Activated CD4-positive, alpha-beta memory T cell treated with anti-CD3 and anti-CD28 coated beads, Interleukin-2, amount 10 ng/mL, durations not matched to agents 7 days and 5 days (primary cell): ENCODE measurements at regions of chr7 and their contacts with region 1.

Region 1: DNA sequence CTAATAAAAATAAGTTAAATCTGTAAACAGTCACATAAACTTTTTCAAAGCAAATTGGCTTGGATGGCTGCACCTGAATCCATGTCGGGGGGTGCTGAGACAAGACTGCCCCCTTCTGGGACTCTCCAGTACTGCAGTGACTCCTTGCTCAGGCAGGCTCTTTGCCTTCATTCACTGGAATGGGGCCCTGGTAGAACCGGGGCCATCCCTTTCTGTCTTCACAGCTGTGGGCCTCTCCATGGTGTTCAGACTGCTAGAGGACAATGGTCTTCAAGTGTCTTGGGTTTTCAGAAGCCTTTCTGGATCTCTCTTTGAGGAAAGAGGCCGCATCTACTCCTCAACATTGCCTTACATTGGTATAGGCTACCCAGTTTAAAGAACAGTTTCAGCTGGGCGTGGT is 16.1 kb upstream of the IMPDH1 start:
- DNase-seq: peak; percentile 82
- H3K4me3 Mint-ChIP-seq: no peak overlapping the region
- H3K27ac Mint-ChIP-seq: no peak overlapping the region
- H3K4me1 Mint-ChIP-seq: peaks cover 14% of the 10 kb centered on the region
- H3K27me3 Mint-ChIP-seq: peaks cover 9% of the 10 kb centered on the region

Region 2: GRCh38 chr7:128381161-128381821 is 44.6 kb before region 1 on chr7:
- CTCF ChIA-PET with region 1: interaction called, 22 read pairs
- POLR2A ChIA-PET with region 1: no interaction called
- DNase-seq: peak; percentile 44
- H3K4me3 Mint-ChIP-seq: no peak overlapping the region
- H3K27ac Mint-ChIP-seq: no peak overlapping the region
- H3K4me1 Mint-ChIP-seq: no peaks in the 10 kb centered on the region
- H3K27me3 Mint-ChIP-seq: peaks cover 1% of the 10 kb centered on the region

Region 3: GRCh38 chr7:128398016-128398840 is 27.6 kb before region 1 on chr7:
- CTCF ChIA-PET with region 1: interaction called, 148 read pairs
- POLR2A ChIA-PET with region 1: interaction called, 6 read pairs
- DNase-seq: peak; percentile 41
- H3K4me3 Mint-ChIP-seq: no peak overlapping the region
- H3K27ac Mint-ChIP-seq: no peak overlapping the region
- H3K4me1 Mint-ChIP-seq: peaks cover 6% of the 10 kb centered on the region
- H3K27me3 Mint-ChIP-seq: no peaks in the 10 kb centered on the region

Region 4: DNA sequence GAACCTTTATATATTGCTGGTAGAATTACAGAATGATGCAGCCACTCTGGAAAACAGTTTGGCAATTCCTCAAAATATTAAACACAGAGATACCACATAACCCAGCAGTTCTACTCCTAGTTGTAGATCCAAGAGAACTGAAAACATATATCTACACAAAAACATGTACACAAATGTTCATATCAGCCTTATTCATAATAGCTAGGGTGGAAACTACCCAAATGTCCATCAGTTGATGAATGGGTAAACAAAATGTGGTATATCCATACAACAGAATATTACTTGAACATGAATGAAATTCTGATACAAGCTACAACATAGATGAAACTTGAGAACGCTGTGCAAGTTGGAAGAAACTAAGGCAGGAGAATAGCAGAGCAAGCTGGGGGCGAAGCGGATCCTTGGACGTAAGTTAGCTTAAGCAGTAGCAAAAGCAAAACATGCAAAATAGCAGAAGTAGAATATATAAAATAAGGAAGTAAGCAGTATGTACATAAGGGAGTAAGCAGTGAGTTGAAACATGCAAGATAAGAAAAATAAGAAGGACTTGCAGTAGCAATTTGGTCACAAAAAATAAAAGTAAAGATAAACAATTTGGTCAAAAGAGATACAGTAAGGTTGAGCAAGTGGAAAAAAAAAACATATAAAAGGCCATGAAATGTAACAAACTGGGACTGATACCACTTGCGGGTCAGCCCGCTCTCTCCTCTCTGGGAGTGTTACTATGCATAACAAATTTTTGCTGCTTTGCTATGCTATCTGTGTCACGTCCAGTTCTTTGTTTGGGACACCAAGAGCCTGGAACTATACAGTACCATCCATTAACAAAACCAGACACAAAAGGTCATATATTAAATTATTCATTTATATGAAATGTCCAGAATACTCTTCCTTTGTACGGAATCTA is 11.8 kb after region 1 on chr7:
- CTCF ChIA-PET with region 1: interaction called, 73 read pairs
- POLR2A ChIA-PET with region 1: no interaction called
- DNase-seq: no peak
- H3K4me3 Mint-ChIP-seq: no peak overlapping the region
- H3K27ac Mint-ChIP-seq: no peak overlapping the region
- H3K4me1 Mint-ChIP-seq: no peaks in the 10 kb centered on the region
- H3K27me3 Mint-ChIP-seq: peaks cover 15% of the 10 kb centered on the region

Region 5: DNA sequence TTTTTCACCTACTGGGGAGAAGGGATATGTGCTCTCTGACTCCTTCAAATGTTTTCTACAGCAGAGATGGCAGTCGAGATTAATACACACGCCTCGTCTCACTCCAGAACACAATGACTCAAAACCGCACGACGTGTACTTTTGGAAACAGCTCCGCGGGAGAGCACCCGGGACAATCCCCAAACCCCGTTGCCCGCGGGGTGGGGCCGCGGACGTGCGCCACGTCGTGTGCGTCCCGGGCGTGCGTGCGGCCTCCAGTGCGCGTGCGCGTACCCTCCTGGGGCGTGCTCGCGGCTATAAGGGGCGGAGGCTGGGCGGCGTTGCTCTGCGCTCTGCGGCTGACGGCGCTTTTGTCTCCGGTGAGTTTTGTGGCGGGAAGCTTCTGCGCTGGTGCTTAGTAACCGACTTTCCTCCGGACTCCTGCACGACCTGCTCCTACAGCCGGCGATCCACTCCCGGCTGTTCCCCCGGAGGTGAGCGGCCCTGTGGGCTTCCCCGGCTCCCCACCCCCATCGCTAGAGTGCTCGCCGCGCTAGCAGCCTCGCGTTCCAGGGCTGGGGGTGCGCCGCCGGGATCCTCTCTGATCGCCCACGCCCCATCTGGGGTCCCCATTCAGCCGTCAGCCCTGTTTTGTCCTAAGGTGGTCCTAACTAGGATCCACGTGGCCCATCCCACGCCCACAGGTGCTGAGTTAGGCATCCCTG is 29.9 kb after region 1 on chr7 and contains the start of gene HILPDA:
- CTCF ChIA-PET with region 1: interaction called, 285 read pairs
- POLR2A ChIA-PET with region 1: interaction called, 5 read pairs
- DNase-seq: peak; percentile 95
- H3K4me3 Mint-ChIP-seq: peak within 1 kb of the TSS; percentile 94
- H3K27ac Mint-ChIP-seq: peak within 1 kb of the TSS; percentile 90
- H3K4me1 Mint-ChIP-seq: peaks cover 56% of the 10 kb centered on the region
- H3K27me3 Mint-ChIP-seq: peaks cover 20% of the 10 kb centered on the region
- total RNA-seq, gene HILPDA: 51.8 to 53.4 TPM